ENCODE measurements at regions of chr7 and their contacts with region 1.

Region 1: DNA sequence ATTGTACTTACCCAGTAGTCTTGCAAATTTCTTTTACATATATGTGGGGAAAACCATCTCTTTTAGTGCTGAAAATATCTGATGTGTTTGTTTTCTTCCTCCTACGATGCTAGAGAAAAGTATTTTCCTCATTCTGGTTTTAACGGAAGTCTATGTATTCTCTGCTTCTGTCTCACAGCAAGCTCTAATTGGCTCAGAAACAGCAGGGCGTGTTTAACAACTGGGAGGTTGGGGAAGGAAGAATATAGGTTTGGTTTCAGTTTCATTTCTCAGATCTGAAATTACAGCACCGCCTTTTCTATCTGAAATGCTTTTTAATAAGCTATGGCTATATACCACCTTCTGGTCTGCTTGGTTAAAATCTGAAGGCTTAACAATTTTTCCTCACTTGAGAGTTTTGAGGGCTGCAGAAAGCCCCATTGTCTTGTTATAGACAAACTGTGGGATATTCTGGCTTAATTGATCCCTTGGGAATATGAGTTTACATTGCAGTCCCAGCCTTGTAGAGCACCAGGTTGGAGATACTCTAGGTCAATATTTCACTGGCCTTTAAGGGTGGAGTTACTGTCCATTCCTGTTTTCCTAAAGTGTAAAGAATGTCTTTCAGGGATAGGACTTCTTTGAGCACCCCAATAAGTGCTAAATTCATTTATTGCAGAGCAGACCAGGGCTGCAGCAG is at the start of gene SAMD9:
- DNase-seq: peak in 8 of 9 donors; percentile 28 to 85 (median 78)
- ATAC-seq: peak; percentile 99
- H3K4me3 ChIP-seq: peak within 1 kb of the TSS; percentile 52
- H3K4me3 Mint-ChIP-seq: peak within 1 kb of the TSS; percentile 78 to 97 (median 92)
- H3K27ac ChIP-seq: peak within 1 kb of the TSS; percentile 82
- H3K27ac Mint-ChIP-seq: peak within 1 kb of the TSS; percentile 85 to 98 (median 93)
- H3K4me1 ChIP-seq: peaks cover 12 to 20% of the 10 kb centered on the region in 2 donors
- H3K4me1 Mint-ChIP-seq: peaks cover 38 to 56% (median 48%) of the 10 kb centered on the region in 7 donors
- H3K27me3 ChIP-seq: no peaks in the 10 kb centered on the region
- H3K27me3 Mint-ChIP-seq: no peaks in the 10 kb centered on the region
- total RNA-seq, gene SAMD9: 20.9 to 61.6 (median 47.8) TPM

Region 2: GRCh38 chr7:91880413-91881241 is 1237.4 kb before region 1 on chr7 and contains the start of gene MTERF1:
- CTCF ChIA-PET with region 1: no interaction called
- POLR2A ChIA-PET with region 1: no interaction called
- intact Hi-C with region 1: loop called in 1 of 2 experiments (anchors 10 kb)
- DNase-seq: peak; percentile 85 to 93 (median 91)
- ATAC-seq: peak; percentile 100
- H3K4me3 ChIP-seq: peak within 1 kb of the TSS; percentile 84
- H3K4me3 Mint-ChIP-seq: peak within 1 kb of the TSS; percentile 88 to 100 (median 98)
- H3K27ac ChIP-seq: peak within 1 kb of the TSS; percentile 72
- H3K27ac Mint-ChIP-seq: peak within 1 kb of the TSS; percentile 89 to 98 (median 96)
- H3K4me1 ChIP-seq: peaks cover 0 to 8% of the 10 kb centered on the region in 2 donors
- H3K4me1 Mint-ChIP-seq: peaks cover 31 to 53% (median 39%) of the 10 kb centered on the region in 7 donors
- H3K27me3 ChIP-seq: no peaks in the 10 kb centered on the region
- H3K27me3 Mint-ChIP-seq: peaks cover 0 to 9% (median 0%) of the 10 kb centered on the region in 5 donors
- total RNA-seq, gene MTERF1: 9.6 to 32.7 (median 17.8) TPM

Region 3: DNA sequence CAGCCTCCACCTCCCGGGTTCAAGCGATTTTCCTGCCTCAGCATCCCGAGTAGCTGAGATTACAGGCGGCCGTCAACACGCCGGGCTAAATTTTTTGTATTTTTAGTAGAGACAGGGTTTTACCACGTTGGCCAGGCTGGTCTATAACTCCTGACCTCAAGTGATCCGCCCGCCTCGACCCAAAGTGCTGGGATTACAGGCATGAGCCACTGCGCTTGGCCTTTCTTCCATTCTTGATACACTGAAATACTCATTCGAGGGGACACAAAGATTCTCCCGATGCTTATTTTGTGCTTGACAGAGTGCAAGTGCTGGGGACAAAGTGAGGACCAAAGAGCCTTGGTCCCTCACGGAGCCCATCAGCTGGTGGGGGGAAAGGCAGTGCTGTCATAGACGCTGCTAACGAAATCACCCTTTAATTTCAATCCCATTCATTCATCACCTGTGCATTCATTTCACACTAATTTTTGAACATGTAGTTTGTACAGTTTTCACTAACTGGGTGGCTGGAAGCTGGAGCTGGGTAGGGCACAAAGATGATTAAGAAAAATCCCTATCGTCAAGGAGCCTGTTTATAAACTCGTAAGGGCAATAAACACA is 527.2 kb before region 1 on chr7:
- CTCF ChIA-PET with region 1: no interaction called
- POLR2A ChIA-PET with region 1: no interaction called
- intact Hi-C with region 1: loop called (anchors 1 to 2 kb)
- DNase-seq: peak in 1 of 9 donors; percentile 11
- ATAC-seq: no peak
- H3K4me3 ChIP-seq: peak overlapping the region; percentile 77
- H3K4me3 Mint-ChIP-seq: peak overlapping the region; percentile 90 to 96 (median 94)
- H3K27ac ChIP-seq: peak overlapping the region; percentile 94
- H3K27ac Mint-ChIP-seq: peak overlapping the region in 8 of 9 donors; percentile 22 to 96 (median 76)
- H3K4me1 ChIP-seq: peaks cover 14 to 21% of the 10 kb centered on the region in 2 donors
- H3K4me1 Mint-ChIP-seq: peaks cover 27 to 46% (median 39%) of the 10 kb centered on the region in 7 donors
- H3K27me3 ChIP-seq: no peaks in the 10 kb centered on the region
- H3K27me3 Mint-ChIP-seq: peaks cover 0 to 4% (median 0%) of the 10 kb centered on the region in 5 donors

Region 4: DNA sequence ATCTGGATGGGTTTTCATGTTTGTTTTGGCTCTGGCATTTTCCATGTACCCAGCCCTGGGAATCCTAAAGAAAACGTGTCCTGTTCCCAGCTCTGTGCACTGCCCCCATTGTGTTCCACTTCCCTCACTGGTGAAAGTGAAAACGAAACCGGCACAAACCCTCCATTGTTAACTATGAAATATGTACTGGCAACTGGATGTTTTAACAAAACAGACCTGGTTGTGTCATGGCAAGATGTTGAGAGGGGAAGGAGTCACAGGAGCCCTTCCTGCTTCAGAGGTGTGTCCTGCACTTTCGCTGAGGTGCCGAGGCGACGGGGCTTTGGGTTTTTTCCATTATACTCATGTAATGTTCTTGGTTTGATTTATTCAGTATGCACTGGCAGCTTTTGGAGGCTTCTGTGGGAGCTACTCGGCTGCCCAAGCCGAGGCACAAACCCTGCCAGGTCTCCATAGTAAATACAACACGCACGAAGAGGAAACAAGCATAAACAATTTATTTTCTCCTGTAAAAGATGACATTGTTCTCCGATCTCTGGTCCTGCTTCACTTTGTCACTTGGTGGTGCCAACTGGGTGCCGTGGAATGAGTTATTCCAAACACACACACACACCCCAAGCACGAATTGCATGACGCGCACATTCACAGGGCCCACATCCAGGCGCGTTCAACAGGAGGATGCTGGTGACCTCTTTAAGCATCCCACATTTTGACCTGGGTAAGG is 399.8 kb before region 1 on chr7:
- CTCF ChIA-PET with region 1: no interaction called
- POLR2A ChIA-PET with region 1: no interaction called
- intact Hi-C with region 1: loop called in 1 of 2 experiments (anchors 2 kb)
- DNase-seq: peak in 8 of 9 donors; percentile 45 to 73 (median 62)
- ATAC-seq: peak; percentile 91
- H3K4me3 ChIP-seq: peak overlapping the region; percentile 62
- H3K4me3 Mint-ChIP-seq: peak overlapping the region; percentile 84 to 96 (median 94)
- H3K27ac ChIP-seq: peak overlapping the region; percentile 49
- H3K27ac Mint-ChIP-seq: peak overlapping the region; percentile 88 to 99 (median 96)
- H3K4me1 ChIP-seq: peaks cover 10 to 14% of the 10 kb centered on the region in 2 donors
- H3K4me1 Mint-ChIP-seq: peaks cover 26 to 73% (median 40%) of the 10 kb centered on the region in 7 donors
- H3K27me3 ChIP-seq: no peaks in the 10 kb centered on the region
- H3K27me3 Mint-ChIP-seq: no peaks in the 10 kb centered on the region

Region 5: DNA sequence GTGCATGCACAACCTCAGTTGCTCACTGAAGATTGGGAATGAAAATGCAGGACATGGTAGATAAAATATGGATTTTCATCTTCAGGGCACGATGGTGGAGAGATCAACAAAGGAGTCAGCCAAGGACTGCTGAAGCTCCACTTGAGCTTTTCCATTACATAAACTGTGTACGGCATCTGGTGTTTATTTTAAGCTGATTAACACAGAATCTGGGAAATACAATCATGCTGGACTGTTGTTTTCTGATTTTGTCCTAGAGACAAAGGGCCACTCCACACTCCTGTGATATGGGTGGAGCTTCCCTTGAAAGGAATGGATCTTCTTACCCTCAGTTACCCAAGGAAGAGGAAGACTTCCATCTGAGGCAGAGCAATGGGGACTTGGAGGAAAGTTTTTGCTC is 120.8 kb before region 1 on chr7:
- CTCF ChIA-PET with region 1: no interaction called
- POLR2A ChIA-PET with region 1: no interaction called
- intact Hi-C with region 1: no loop called
- DNase-seq: no peak
- ATAC-seq: no peak
- H3K4me3 ChIP-seq: no peak overlapping the region
- H3K4me3 Mint-ChIP-seq: no peak overlapping the region
- H3K27ac ChIP-seq: no peak overlapping the region
- H3K27ac Mint-ChIP-seq: no peak overlapping the region
- H3K4me1 ChIP-seq: no peaks in the 10 kb centered on the region
- H3K4me1 Mint-ChIP-seq: peaks cover 0 to 3% (median 0%) of the 10 kb centered on the region in 7 donors
- H3K27me3 ChIP-seq: no peaks in the 10 kb centered on the region
- H3K27me3 Mint-ChIP-seq: peaks cover 4 to 21% (median 10%) of the 10 kb centered on the region in 5 donors

Region 6: DNA sequence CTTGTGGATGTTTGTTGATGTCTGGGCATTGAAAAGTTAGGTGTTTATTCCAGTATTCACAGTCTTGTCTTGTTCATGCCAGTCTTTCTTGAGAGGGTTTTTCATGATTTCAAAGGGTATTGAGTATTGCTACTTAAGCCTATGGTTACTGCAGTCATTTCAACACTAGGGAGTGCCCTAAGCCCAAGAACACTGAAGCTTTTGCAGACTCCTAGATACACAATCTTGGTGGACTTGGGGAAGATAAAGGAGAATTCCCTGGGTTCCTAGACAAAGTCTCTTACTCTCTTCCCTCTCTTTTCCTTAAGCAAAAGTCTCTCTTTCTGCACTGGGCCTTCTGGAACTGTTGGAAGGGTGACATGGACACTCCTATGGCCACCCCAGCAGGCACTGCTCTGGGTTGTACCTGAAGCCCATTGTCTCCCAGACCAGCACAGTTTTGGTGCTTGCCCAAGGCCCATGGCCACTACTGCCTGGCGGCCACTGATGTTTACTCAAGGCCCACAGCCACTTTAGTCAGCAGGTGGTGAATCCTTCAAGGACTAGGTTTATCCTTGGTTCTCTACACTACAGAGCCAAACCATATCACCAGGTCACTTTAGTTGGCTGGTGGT is 25.1 kb before region 1 on chr7:
- CTCF ChIA-PET with region 1: no interaction called
- POLR2A ChIA-PET with region 1: no interaction called
- intact Hi-C with region 1: loop called in 1 of 2 experiments (anchors 2 kb)
- DNase-seq: peak in 1 of 9 donors; percentile 2
- ATAC-seq: no peak
- H3K4me3 ChIP-seq: no peak overlapping the region
- H3K4me3 Mint-ChIP-seq: no peak overlapping the region
- H3K27ac ChIP-seq: no peak overlapping the region
- H3K27ac Mint-ChIP-seq: no peak overlapping the region
- H3K4me1 ChIP-seq: no peaks in the 10 kb centered on the region
- H3K4me1 Mint-ChIP-seq: no peaks in the 10 kb centered on the region
- H3K27me3 ChIP-seq: no peaks in the 10 kb centered on the region
- H3K27me3 Mint-ChIP-seq: peaks cover 10 to 37% (median 12%) of the 10 kb centered on the region in 5 donors

Region 7: GRCh38 chr7:94509879-94510581 is 1392.0 kb after region 1 on chr7:
- CTCF ChIA-PET with region 1: no interaction called
- POLR2A ChIA-PET with region 1: no interaction called
- intact Hi-C with region 1: loop called in 1 of 2 experiments (anchors 10 kb)
- DNase-seq: peak; percentile 51 to 75 (median 69)
- ATAC-seq: peak; percentile 90
- H3K4me3 ChIP-seq: peak overlapping the region; percentile 74
- H3K4me3 Mint-ChIP-seq: peak overlapping the region in 7 of 10 donors; percentile 75 to 93 (median 88)
- H3K27ac ChIP-seq: peak overlapping the region; percentile 90
- H3K27ac Mint-ChIP-seq: peak overlapping the region in 7 of 9 donors; percentile 70 to 94 (median 92)
- H3K4me1 ChIP-seq: peaks cover 17 to 22% of the 10 kb centered on the region in 2 donors
- H3K4me1 Mint-ChIP-seq: peaks cover 27 to 52% (median 42%) of the 10 kb centered on the region in 7 donors
- H3K27me3 ChIP-seq: no peaks in the 10 kb centered on the region
- H3K27me3 Mint-ChIP-seq: no peaks in the 10 kb centered on the region

Measured in naive thymus-derived CD4-positive, alpha-beta T cell (primary cell).